HEK293 (cell line): ENCODE measurements at regions of chr12 and their contacts with region 1.

Region 1: GRCh38 chr12:67355578-67356379 is 86.6 kb downstream of the CAND1 start:
- H3K4me3 ChIP-seq: no peak overlapping the region
- H3K27ac ChIP-seq: no peak overlapping the region
- H3K4me1 ChIP-seq: peaks cover 7% of the 10 kb centered on the region
- CTCF ChIP-seq: peak; percentile 59; the same call in 1 of the 2 replicates

Region 2: DNA sequence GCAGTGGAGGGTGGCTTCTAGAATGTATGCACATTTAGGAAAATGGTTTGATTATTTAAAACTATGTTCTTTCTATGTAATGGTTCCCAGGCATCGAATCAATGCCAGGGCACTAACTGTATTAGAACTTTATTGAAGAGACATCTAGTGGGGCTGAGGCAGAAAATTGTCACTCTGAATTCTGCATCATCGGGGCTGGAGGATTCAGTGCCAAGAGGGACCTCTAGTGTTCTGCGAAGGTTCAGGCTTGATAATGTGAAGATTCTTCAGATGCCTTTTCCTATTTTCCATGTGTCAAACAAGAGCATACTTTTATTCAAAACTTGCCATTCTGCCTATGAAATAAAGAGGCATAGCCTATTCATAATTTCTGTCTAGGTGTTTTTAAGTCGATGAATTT is 59.7 kb after region 1 on chr12:
- CTCF ChIA-PET with region 1: interaction called, 16 read pairs
- POLR2A ChIA-PET with region 1: no interaction called
- H3K4me3 ChIP-seq: no peak overlapping the region
- H3K27ac ChIP-seq: no peak overlapping the region
- H3K4me1 ChIP-seq: peaks cover 13% of the 10 kb centered on the region; the same call in 1 of the 2 replicates
- CTCF ChIP-seq: peak; percentile 78

Region 3: DNA sequence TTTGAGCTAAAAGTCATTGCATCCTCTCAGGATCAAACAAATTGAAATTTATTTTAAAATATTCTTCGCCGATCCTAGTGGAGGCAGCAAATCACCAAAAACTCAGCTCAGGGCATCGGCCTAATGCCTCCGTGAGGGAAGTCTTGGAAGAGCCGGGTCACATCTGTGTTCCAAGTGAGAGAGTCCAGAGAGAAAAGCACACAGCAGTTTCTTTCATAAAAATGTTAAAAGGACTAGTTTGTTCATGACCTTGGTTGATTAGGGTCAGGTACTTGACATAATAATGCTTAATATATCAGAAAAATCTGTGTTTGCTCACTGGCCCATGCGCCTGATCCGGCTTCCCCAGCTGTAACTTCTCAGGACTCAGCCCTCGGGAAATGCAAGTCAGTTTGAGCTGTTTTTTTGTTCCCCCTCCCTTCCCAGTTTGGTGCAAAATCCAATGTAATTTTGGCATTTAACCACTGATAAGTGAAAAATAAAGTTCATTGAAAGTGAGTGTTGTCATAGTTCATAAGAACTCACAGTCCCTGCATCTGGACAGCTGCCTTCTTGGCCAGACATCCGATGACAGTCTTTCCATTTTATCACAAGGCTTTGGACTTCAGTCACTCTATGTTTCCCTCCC is 75.0 kb after region 1 on chr12:
- CTCF ChIA-PET with region 1: interaction called, 4 read pairs
- POLR2A ChIA-PET with region 1: interaction called, 10 read pairs
- H3K4me3 ChIP-seq: no peak overlapping the region
- H3K27ac ChIP-seq: no peak overlapping the region
- H3K4me1 ChIP-seq: peaks cover 14% of the 10 kb centered on the region
- CTCF ChIP-seq: peak; percentile 13; the same call in 1 of the 2 replicates

Region 4: GRCh38 chr12:67441736-67442346 is 86.1 kb after region 1 on chr12:
- CTCF ChIA-PET with region 1: interaction called, 22 read pairs
- POLR2A ChIA-PET with region 1: no interaction called
- H3K4me3 ChIP-seq: no peak overlapping the region
- H3K27ac ChIP-seq: peak overlapping the region; percentile 43; the same call in 1 of the 2 replicates
- H3K4me1 ChIP-seq: peaks cover 5% of the 10 kb centered on the region
- CTCF ChIP-seq: peak; percentile 88

Region 5: DNA sequence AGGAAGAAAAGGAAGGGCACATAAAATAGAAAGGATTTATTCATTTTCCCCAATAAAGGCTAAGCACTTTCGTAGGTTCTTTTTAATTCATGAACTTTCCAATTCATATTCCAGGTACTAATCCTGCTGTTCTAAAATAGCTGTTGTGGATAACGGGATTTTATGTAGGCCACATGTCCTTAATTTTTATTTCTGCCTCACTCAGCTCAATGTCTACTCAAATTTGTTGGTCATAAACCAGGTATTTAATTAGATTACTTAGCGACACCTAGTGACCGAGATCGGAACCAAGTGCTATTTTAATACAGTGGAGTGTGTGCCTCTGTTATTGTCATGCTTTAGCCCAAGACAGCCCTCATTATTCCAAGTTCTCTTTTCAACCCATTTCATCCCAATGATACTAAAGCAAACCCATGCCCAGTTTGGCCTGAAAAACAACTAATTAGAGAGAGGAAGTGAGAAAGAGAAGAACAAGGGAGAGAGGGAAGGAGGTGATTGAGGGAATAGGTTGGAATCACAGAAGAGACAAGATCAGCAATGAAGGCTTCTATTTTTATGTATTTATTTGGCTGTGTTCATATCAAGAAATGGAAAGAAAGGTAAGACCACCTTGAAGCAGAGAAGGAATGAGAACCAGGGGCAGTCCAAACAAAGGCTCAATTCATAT is 587.6 kb after region 1 on chr12:
- CTCF ChIA-PET with region 1: interaction called, 19 read pairs
- POLR2A ChIA-PET with region 1: no interaction called
- H3K4me3 ChIP-seq: no peak overlapping the region
- H3K27ac ChIP-seq: no peak overlapping the region
- H3K4me1 ChIP-seq: no peaks in the 10 kb centered on the region
- CTCF ChIP-seq: peak; percentile 65